ENCODE measurements at regions of chr13 and their contacts with region 1.

Region 1: DNA sequence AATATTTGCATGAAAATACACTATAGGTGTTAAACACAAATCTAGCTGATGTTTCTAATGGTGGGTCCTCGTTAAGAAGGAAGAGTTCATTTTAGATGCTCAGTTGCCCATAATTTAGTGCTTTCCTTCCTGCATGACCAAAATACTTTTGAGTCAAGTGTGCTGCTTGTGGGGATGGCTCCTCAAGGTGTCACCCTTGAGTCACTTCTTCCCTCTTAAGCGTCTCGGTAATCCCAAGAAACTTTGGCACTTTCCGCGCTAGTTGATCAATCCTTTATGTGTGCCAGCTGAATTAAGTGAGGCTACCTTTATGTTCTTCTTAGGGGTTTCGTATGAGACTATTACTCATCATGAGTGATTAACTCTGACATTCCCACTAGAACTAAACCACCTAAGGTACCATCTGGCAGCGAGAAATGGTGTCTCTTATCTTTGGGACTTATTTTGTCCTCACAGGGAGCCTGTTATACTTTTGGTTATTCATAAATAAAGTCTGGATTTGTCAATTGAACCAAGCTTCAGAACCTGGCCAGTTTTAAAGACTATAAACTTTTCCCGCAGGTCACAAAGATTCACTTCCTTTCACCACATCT is 106.8 kb downstream of the NHLRC3 start:
- DNase-seq: peak; percentile 49
- CTCF ChIP-seq: peak; percentile 74

Region 2: GRCh38 chr13:39132286-39133230 is 12.5 kb before region 1 on chr13:
- CTCF ChIA-PET with region 1: interaction called, 20 read pairs
- POLR2A ChIA-PET with region 1: no interaction called
- DNase-seq: no peak
- CTCF ChIP-seq: no peak

Measured in GM10248 (cell line).